ENCODE measurements at regions of chr11 and their contacts with region 1.

Region 1: DNA sequence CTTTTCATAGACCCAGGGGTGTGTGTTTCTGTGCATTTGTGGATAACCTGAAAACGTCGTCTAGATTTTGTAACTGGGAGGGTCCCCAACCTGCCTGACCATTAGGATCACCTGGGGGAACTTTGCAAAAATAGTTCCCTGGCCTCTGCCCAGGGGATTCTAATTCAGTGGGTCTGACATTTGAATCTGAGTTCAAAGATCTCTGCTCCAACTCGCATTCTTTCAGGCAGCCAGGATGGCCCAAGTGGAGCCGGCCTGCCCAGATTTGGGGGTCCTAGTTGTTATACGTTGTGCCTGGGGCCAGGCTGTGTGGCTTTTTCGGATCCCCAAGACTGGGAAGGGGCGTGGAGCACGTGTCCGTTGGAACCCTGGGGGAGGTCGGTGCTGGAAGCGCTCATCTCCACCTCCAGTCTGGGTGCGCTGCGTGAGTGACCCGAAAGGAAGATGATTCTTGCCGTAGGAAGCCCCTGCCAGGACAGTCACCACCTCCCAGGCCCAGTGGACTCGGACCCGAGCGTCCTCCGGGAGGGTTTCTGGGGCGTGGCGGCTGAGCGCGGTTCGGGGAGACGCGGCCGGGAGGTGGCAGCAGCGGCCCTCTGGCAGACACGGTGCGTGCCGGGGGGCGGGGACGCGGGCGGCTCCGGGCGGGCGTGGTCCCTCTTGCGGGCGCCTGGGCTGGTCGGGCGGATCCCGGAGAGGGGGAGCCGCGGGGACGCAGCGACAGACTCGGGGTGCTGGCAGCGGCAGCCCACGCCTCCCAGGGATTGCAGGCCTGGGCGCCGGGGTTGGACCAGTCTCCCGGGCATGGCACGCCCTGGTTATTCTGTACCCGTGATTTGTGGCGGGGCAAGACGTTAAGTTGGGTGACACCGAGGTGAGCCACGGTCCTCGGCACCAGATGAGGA is 29.2 kb upstream of the PLET1 start:
- DNase-seq: peak; percentile 81
- H3K4me3 Mint-ChIP-seq: peak overlapping the region; percentile 78
- H3K27ac Mint-ChIP-seq: no peak overlapping the region
- H3K4me1 Mint-ChIP-seq: peaks cover 23% of the 10 kb centered on the region
- H3K27me3 Mint-ChIP-seq: peaks cover 6% of the 10 kb centered on the region

Region 2: GRCh38 chr11:111938687-111939160 is 351.1 kb before region 1 on chr11:
- intact Hi-C with region 1: loop called (anchors 5 kb)
- DNase-seq: peak; percentile 22
- H3K4me3 Mint-ChIP-seq: peak overlapping the region; percentile 88
- H3K27ac Mint-ChIP-seq: peak overlapping the region; percentile 92
- H3K4me1 Mint-ChIP-seq: peaks cover 58% of the 10 kb centered on the region
- H3K27me3 Mint-ChIP-seq: no peaks in the 10 kb centered on the region

Region 3: GRCh38 chr11:112453601-112454577 is 164.0 kb after region 1 on chr11:
- intact Hi-C with region 1: loop called (anchors 1 kb)
- DNase-seq: no peak
- H3K4me3 Mint-ChIP-seq: no peak overlapping the region
- H3K27ac Mint-ChIP-seq: no peak overlapping the region
- H3K4me1 Mint-ChIP-seq: peaks cover 5% of the 10 kb centered on the region
- H3K27me3 Mint-ChIP-seq: peaks cover 6% of the 10 kb centered on the region

Region 4: DNA sequence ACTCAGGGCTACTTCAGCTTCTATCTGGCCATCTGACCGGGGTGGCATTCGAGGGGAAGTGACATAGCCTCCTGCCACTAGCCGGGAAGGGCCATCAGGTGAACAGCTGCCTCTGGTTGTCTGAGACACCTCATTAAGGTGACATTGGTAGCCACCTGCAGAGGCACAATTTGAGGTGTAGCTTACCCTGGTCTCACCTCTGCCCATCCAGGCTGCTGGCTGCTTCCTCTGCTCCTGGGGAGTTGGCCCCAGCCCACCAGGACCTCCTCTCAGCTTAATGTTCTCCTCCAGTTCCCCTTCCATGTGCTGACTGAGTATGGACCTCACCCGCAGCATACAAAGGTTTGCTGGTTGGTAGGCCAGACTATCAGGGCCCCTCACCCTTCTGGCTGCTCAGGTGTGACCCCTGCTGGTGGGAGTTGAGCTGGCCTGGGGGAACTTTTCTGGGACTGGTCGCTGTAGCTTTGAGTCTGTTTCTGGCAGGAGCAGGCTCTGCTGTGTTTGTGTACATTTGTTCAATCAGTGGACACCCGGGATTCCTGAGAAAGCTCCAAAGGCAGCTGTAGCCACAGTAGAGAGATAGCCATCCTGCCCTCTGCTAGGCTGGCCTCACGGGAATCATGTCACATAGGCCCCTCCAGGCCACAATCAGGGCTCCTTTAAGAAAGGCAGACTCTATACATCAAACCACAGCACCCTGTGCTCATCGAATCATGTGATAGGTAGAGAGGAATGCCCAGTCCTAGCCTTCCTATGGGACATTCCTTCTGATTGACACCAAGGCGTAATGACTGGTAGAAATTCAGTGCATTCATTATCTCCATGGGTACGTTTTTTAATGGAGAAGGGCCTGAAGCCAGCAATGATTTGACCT is 265.9 kb after region 1 on chr11:
- intact Hi-C with region 1: loop called (anchors 1 kb)
- DNase-seq: peak; percentile 33
- H3K4me3 Mint-ChIP-seq: no peak overlapping the region
- H3K27ac Mint-ChIP-seq: no peak overlapping the region
- H3K4me1 Mint-ChIP-seq: no peaks in the 10 kb centered on the region
- H3K27me3 Mint-ChIP-seq: peaks cover 3% of the 10 kb centered on the region

Region 5: GRCh38 chr11:112795142-112795815 is 505.4 kb after region 1 on chr11:
- intact Hi-C with region 1: loop called (anchors 5 kb)
- DNase-seq: no peak
- H3K4me3 Mint-ChIP-seq: no peak overlapping the region
- H3K27ac Mint-ChIP-seq: no peak overlapping the region
- H3K4me1 Mint-ChIP-seq: no peaks in the 10 kb centered on the region
- H3K27me3 Mint-ChIP-seq: no peaks in the 10 kb centered on the region

Region 6: DNA sequence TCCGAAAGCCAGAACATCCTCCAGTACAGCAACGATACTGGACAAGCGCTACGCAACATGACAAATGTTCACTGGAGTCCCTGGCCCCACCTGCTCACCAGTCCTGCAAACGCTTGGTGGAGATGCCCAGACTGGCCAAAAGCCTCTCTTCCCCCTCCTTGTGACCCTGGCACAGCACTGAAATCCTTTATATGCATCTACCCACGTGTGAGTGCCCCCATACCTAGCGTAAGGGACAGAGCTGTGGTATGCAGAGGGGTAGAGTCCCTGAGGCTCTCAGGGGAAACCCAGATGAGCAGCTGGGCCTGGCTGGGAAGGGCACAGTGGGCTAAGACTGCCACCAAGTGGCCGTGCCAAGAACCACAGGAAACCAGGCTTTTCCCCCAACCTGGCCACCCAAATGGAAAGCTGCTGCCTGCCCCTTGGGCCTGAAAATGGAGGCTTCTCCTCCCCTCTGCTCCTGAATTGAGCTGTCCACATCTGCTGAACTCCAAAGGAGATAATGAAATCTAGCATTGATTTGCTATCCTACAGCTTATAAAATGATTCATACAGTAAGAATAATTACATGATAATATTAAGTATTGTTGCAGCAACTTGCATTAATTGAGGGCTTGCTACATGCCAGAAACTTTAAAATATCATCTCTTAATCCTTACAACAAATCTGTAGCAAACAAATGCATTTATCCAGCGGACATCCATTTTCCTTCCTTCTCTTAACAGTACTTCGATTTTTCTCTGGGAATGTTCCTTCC is 999.8 kb after region 1 on chr11:
- intact Hi-C with region 1: loop called (anchors 1 kb)
- DNase-seq: peak; percentile 52
- H3K4me3 Mint-ChIP-seq: no peak overlapping the region
- H3K27ac Mint-ChIP-seq: no peak overlapping the region
- H3K4me1 Mint-ChIP-seq: no peaks in the 10 kb centered on the region
- H3K27me3 Mint-ChIP-seq: peaks cover 4% of the 10 kb centered on the region